Transverse colon (tissue), 4 donors: ENCODE measurements at regions of chr6 and their contacts with region 1.

Region 1: GRCh38 chr6:10954590-10955010 is 67.7 kb downstream of the SYCP2L start:
- DNase-seq: peak; percentile 75
- H3K4me3 ChIP-seq: no peak overlapping the region
- H3K27ac ChIP-seq: no peak overlapping the region
- H3K4me1 ChIP-seq: no peaks in the 10 kb centered on the region
- H3K27me3 ChIP-seq: no peaks in the 10 kb centered on the region
- CTCF ChIP-seq: peak; percentile 51 to 75 (median 61)
- EP300 ChIP-seq: no peak
- POLR2A ChIP-seq: no peak

Region 2: GRCh38 chr6:10668126-10668917 is 286.3 kb before region 1 on chr6:
- in situ Hi-C with region 1: no loop called
- intact Hi-C with region 1: no loop called
- DNase-seq: no peak
- H3K4me3 ChIP-seq: no peak overlapping the region
- H3K27ac ChIP-seq: no peak overlapping the region
- H3K4me1 ChIP-seq: no peaks in the 10 kb centered on the region
- H3K27me3 ChIP-seq: peaks cover 13% of the 10 kb centered on the region
- CTCF ChIP-seq: no peak
- EP300 ChIP-seq: no peak
- POLR2A ChIP-seq: no peak

Region 3: DNA sequence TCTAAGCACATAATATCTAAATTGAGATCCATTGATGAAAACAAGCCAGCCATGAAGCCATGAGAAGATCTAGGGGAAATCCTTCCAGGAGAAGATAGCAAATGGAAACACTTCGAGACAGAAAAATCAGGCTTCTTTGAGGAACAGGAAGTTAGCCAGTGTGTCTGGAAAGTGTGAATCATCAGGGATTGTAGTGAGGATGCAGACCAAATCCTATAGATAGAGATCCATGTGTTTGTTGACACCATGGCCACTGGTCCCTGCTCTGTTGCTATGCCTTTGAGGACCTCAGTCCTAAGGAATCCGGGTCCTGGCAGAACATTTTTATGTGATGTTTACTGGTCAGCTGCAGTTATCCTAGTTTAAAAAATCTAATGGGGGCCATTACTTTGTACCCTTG is 96.1 kb after region 1 on chr6:
- in situ Hi-C with region 1: loop called in 1 of 4 experiments (anchors 25 kb)
- intact Hi-C with region 1: no loop called
- DNase-seq: no peak
- H3K4me3 ChIP-seq: no peak overlapping the region
- H3K27ac ChIP-seq: no peak overlapping the region
- H3K4me1 ChIP-seq: no peaks in the 10 kb centered on the region
- H3K27me3 ChIP-seq: peaks cover 52% of the 10 kb centered on the region
- CTCF ChIP-seq: no peak
- EP300 ChIP-seq: no peak
- POLR2A ChIP-seq: no peak

Region 4: DNA sequence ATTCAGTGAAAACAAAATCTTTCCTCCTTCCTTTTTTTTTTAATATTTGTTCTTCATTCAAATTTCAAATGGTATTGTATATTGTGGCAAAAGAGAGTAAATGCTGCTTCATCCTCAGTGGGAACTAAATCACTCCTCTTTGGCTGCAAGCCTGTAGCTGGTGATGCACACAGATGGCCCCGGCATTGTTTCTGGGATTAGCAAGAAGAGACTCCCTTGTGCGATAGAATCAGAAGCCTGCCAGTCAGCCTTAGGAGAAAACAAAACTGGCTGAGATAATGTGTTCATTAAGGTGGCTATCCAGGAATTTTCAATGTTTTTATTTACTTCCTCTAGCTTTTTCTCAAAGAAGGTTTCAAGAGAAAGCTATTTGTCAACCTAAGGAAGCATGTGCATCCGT is 110.2 kb after region 1 on chr6:
- in situ Hi-C with region 1: loop called in 3 of 4 experiments (anchors 10 to 25 kb)
- intact Hi-C with region 1: no loop called
- DNase-seq: no peak
- H3K4me3 ChIP-seq: no peak overlapping the region
- H3K27ac ChIP-seq: no peak overlapping the region
- H3K4me1 ChIP-seq: no peaks in the 10 kb centered on the region
- H3K27me3 ChIP-seq: no peaks in the 10 kb centered on the region
- CTCF ChIP-seq: no peak
- EP300 ChIP-seq: no peak
- POLR2A ChIP-seq: no peak

Region 5: DNA sequence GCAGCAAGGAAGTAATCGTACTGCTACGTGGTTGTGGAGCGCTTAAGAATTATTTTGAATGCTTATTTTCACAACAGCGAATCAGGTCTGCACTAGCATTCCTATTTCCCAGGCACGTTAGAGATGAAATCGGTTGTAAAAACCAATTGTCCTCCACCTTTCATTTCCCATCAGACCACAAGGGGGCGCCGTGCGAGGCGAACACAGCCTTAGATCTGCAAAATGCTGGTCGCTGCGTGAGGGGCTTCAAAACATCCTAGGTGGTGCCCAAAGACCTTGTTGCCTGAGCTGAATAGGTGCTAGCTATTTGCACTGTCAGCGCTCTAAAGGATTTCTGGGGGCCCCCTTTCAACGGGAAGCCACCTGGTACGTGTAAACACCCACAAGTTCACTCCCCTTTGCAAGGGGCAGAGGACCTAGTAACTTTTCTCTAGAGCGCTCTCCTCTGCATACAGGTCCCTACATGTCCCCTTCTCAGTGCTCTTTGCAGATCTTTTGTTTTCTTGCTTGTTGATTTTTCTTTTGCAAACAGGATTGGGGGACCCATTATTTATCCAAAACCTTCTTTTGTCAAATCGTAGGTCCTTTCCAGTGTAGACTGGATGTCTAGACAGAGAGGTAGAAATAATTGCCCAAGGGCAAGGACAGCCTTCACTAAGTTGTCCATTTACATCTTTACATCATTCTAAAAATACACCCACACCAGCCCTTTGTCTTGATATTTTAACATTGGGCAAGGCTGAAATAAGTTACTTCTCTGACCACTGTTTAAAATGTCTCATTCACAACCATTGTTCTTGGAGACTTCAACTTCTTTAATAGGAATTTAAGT is 218.1 kb after region 1 on chr6:
- in situ Hi-C with region 1: no loop called
- intact Hi-C with region 1: no loop called
- DNase-seq: peak; percentile 75
- H3K4me3 ChIP-seq: no peak overlapping the region
- H3K27ac ChIP-seq: no peak overlapping the region
- H3K4me1 ChIP-seq: peaks cover 4 to 14% (median 5%) of the 10 kb centered on the region in 4 donors
- H3K27me3 ChIP-seq: no peaks in the 10 kb centered on the region
- CTCF ChIP-seq: peak; percentile 80 to 91 (median 83)
- EP300 ChIP-seq: no peak
- POLR2A ChIP-seq: no peak